ENCODE measurements at regions of chr1 and their contacts with region 1.

Region 1: DNA sequence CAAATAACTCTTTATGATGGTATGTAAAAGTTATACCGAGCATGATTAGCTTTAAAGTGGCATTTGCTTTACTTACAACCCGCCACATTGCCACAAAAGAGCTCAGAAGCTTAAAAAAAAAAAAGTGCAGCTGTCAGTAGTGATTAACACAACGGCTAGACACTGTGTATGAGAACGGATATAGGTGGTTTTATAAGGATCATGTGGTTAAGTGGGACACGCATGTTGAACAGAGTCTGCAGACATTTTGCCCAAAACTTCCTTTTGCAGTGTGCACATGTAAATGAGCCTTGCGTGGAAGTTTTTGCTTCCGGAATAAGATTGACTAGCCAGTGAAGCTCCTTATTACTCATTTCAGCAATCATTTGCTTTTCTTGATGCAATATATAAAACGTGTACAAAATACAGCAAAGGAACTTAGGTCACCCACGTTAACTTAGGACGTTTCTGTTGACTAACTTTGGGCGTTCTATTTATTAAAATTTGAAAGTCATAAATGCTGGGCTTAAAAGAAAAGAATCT is 58.7 kb upstream of the RGS1 start:
- DNase-seq: peak; percentile 92
- ATAC-seq: peak; percentile 96
- H3K4me3 ChIP-seq: peak overlapping the region in 2 of 5 experiments; percentile 7 to 44
- H3K4me3 Mint-ChIP-seq: peak overlapping the region; percentile 80
- H3K27ac ChIP-seq: peak overlapping the region in 1 of 2 donors; percentile 57
- H3K27ac Mint-ChIP-seq: peak overlapping the region; percentile 64
- H3K4me1 ChIP-seq: peaks cover 43 to 51% of the 10 kb centered on the region in 2 donors
- H3K4me1 Mint-ChIP-seq: peaks cover 52% of the 10 kb centered on the region
- H3K27me3 ChIP-seq: peaks cover 0 to 17% (median 7%) of the 10 kb centered on the region in 4 experiments
- H3K27me3 Mint-ChIP-seq: peaks cover 18% of the 10 kb centered on the region
- CTCF ChIP-seq: no peak

Region 2: GRCh38 chr1:192506741-192507155 is 10.1 kb before region 1 on chr1:
- CTCF ChIA-PET with region 1: interaction called, 16 read pairs
- POLR2A ChIA-PET with region 1: no interaction called
- intact Hi-C with region 1: no loop called
- DNase-seq: peak; percentile 31
- ATAC-seq: peak; percentile 66
- H3K4me3 ChIP-seq: no peak overlapping the region
- H3K4me3 Mint-ChIP-seq: no peak overlapping the region
- H3K27ac ChIP-seq: no peak overlapping the region
- H3K27ac Mint-ChIP-seq: no peak overlapping the region
- H3K4me1 ChIP-seq: no peaks in the 10 kb centered on the region
- H3K4me1 Mint-ChIP-seq: no peaks in the 10 kb centered on the region
- H3K27me3 ChIP-seq: peaks cover 0 to 3% (median 0%) of the 10 kb centered on the region in 4 experiments
- H3K27me3 Mint-ChIP-seq: peaks cover 10% of the 10 kb centered on the region
- CTCF ChIP-seq: no peak

Region 3: DNA sequence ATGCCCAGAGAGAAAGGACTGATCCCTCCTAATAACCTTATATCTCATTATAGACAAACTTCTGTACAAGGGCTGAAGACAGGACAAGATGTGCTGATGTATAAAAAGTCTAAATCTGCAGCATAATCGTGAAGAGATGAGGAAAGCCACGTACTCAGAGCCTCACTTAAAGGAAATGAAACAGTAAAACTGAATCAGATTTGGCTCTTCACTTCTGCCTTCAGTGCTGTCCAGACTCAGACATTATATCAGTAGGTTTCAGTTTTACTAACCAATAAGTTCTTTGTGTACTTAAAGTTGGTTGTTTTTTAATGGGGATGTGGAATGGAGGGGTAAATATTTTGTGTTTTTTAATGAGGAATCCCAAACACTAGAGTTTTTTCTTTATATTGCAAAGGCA is 13.4 kb after region 1 on chr1:
- CTCF ChIA-PET with region 1: no interaction called
- POLR2A ChIA-PET with region 1: no interaction called
- intact Hi-C with region 1: loop called (anchors 1 kb)
- DNase-seq: peak; percentile 50
- ATAC-seq: peak; percentile 80
- H3K4me3 ChIP-seq: no peak overlapping the region
- H3K4me3 Mint-ChIP-seq: peak overlapping the region; percentile 29
- H3K27ac ChIP-seq: no peak overlapping the region
- H3K27ac Mint-ChIP-seq: peak overlapping the region; percentile 16
- H3K4me1 ChIP-seq: peaks cover 6 to 9% of the 10 kb centered on the region in 2 donors
- H3K4me1 Mint-ChIP-seq: peaks cover 18% of the 10 kb centered on the region
- H3K27me3 ChIP-seq: peaks cover 0 to 9% (median 5%) of the 10 kb centered on the region in 4 experiments
- H3K27me3 Mint-ChIP-seq: peaks cover 10% of the 10 kb centered on the region
- CTCF ChIP-seq: no peak

Region 4: DNA sequence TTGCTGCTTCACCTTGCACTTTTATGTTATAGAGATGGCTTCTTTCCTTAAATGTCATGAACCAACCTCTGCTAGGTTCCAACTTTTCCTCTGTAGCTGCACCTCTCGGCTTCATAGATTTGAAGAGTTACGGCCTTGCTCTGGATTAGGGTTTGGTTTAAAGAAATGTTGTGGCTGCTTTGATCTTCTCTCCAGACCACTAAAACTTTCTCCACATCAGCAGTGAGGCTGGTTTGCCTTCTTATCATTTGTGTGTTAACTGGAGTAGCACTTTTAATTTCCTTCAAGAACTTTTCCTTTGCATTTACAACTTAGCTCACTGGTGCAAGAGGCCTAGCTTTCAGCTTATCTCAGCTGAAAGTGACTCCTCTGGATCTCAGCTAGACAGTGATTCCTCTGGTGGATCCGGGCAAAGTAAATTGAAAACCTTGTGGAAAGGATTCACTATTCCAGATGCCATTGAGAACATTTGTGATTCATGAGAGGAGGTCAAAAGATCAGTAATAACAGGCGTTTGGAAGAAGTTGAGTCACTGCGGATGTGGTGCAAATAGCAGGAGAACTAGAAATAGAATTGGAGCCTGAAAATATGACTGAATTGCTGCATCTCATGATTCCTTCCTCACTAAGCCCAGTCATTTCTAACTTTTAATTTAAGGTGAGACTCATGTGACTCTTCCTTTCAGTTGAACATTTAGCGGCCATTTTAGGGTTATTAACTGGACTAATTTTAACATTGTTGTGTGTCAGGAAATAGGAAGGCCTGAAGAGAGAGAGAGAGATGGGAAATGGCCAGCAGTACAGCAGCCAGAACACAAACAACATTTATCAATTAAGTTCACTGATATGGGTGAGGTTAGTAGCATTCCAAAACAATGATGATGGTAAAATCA is 42.5 kb after region 1 on chr1:
- CTCF ChIA-PET with region 1: no interaction called
- POLR2A ChIA-PET with region 1: no interaction called
- intact Hi-C with region 1: loop called (anchors 5 kb)
- DNase-seq: no peak
- ATAC-seq: no peak
- H3K4me3 ChIP-seq: no peak overlapping the region
- H3K4me3 Mint-ChIP-seq: no peak overlapping the region
- H3K27ac ChIP-seq: no peak overlapping the region
- H3K27ac Mint-ChIP-seq: no peak overlapping the region
- H3K4me1 ChIP-seq: no peaks in the 10 kb centered on the region
- H3K4me1 Mint-ChIP-seq: peaks cover 15% of the 10 kb centered on the region
- H3K27me3 ChIP-seq: peaks cover 0 to 2% (median 0%) of the 10 kb centered on the region in 4 experiments
- H3K27me3 Mint-ChIP-seq: no peaks in the 10 kb centered on the region
- CTCF ChIP-seq: no peak

Measured in B cell (primary cell).